Left ventricle myocardium superior (tissue), 1 donor: ENCODE measurements at regions of chr1 and their contacts with region 1.

Region 1: GRCh38 chr1:205977402-205978014 is 25.7 kb downstream of the RAB7B start:
- DNase-seq: peak; percentile 72
- ATAC-seq: peak; percentile 84

Region 2: GRCh38 chr1:205919026-205919746 is 58.3 kb before region 1 on chr1:
- intact Hi-C with region 1: loop called (anchors 1 kb)
- DNase-seq: peak; percentile 82
- ATAC-seq: peak; percentile 62